ENCODE measurements at regions of chr11 and their contacts with region 1.

Region 1: DNA sequence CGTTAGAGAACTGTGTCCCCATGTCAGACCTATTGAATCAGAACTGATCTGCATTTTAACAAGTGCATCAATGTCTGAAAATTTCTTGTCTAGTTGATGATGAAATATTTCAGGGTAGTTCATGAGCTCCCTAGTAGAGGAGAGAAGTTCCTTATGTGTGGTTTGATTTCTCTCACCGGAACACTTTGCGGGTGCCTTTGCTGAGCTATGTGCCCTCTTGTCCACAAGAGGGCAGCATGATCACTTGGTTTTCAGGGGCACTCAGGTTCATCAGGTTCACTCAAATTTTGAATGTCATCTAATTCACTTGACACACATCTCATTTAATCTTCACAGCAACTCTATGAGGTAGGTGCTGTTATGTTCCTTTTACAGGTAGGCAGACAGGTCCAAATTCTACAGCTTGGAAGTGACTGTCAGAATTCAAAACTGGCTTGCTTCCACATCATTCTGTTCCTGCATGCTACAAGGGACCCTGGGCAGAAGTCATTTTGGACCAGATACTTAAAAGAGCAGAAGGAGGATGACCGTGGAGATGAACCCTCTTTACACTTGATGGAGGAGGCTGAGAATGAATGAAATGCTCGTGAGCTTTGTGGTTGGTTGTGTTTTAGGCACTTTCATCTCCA is 55.6 kb downstream of the P4HA3 start:
- DNase-seq: peak; percentile 81
- H3K4me3 ChIP-seq: no peak overlapping the region
- H3K27ac ChIP-seq: no peak overlapping the region
- H3K4me1 ChIP-seq: no peaks in the 10 kb centered on the region
- H3K27me3 ChIP-seq: no peaks in the 10 kb centered on the region
- CTCF ChIP-seq: peak; percentile 83 to 94
- POLR2A ChIP-seq: no peak

Region 2: DNA sequence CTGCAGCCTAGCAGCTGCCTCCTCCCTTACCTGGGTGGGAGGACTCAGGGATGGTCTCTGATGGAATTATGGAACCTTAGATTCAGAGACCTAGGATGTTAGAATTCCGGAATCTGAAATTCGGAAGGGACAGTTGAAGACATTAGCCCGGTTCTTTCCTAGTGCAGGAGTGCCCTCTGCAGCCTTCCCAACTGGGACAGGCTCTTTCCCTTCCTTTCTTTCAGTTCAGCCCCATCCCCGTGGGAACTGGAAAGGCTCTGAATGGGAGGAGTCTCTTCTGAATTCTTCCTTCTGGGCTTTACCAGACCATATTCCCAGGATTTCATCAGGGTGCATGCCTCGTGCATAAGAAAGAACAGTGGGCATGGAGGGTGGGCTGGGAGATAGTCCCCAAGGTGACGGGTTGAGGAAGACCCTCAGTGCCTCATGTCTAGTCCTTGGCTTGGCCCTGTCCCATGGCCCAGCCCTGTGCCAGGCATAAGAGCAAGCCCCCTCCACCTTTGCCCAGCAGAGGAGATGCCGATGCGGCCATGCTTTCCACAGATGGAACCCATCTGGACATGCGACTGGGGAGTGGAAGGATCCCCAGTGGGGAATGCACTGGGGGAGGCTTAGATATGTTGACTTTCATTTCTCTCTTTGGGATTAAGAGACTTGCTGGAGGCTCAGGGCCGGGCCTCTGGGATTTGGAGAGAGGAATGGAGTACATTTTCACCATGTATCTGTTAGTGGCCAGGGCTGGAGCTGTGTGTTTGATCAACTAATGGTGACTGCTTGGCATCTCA is 290.6 kb before region 1 on chr11:
- CTCF ChIA-PET with region 1: interaction called, 9 read pairs
- POLR2A ChIA-PET with region 1: no interaction called
- dilution Hi-C with region 1: no loop called
- intact Hi-C with region 1: loop called (anchors 1 kb)
- DNase-seq: no peak
- H3K4me3 ChIP-seq: no peak overlapping the region
- H3K27ac ChIP-seq: no peak overlapping the region
- H3K4me1 ChIP-seq: no peaks in the 10 kb centered on the region
- H3K27me3 ChIP-seq: peaks cover 0 to 2% of the 10 kb centered on the region in 2 experiments
- CTCF ChIP-seq: no peak
- POLR2A ChIP-seq: no peak

Region 3: DNA sequence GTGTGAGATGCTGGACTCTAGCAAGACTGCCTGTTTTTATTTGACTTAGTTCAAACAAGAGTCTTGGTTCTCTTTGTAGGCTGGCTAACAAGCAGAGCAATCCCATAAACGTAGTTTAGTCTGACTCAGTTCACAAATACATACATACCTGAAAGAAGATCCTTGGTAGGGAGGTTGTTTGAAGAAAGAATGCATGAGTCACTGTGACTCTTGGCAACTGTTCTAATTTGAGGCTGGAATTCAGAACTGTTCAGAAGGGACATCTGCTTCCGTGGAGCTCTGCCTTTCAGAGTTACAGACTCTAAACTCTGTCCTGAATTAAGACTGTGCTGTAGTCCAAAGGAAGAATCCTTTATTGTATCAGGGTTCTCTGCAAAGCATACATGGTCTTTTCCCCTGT is 117.3 kb before region 1 on chr11:
- CTCF ChIA-PET with region 1: no interaction called
- POLR2A ChIA-PET with region 1: no interaction called
- dilution Hi-C with region 1: no loop called
- intact Hi-C with region 1: no loop called
- DNase-seq: peak; percentile 86
- H3K4me3 ChIP-seq: no peak overlapping the region
- H3K27ac ChIP-seq: peak overlapping the region; percentile 37
- H3K4me1 ChIP-seq: peaks cover 26% of the 10 kb centered on the region
- H3K27me3 ChIP-seq: no peaks in the 10 kb centered on the region
- CTCF ChIP-seq: no peak
- POLR2A ChIP-seq: no peak

Region 4: GRCh38 chr11:74220376-74220775 is 35.5 kb before region 1 on chr11:
- CTCF ChIA-PET with region 1: no interaction called
- POLR2A ChIA-PET with region 1: no interaction called
- dilution Hi-C with region 1: no loop called
- intact Hi-C with region 1: no loop called
- DNase-seq: no peak
- H3K4me3 ChIP-seq: no peak overlapping the region
- H3K27ac ChIP-seq: no peak overlapping the region
- H3K4me1 ChIP-seq: no peaks in the 10 kb centered on the region
- H3K27me3 ChIP-seq: no peaks in the 10 kb centered on the region
- CTCF ChIP-seq: no peak
- POLR2A ChIP-seq: no peak

Region 5: GRCh38 chr11:74288911-74289310 is 33.1 kb after region 1 on chr11:
- CTCF ChIA-PET with region 1: no interaction called
- POLR2A ChIA-PET with region 1: no interaction called
- dilution Hi-C with region 1: no loop called
- intact Hi-C with region 1: no loop called
- DNase-seq: peak; percentile 61
- H3K4me3 ChIP-seq: no peak overlapping the region
- H3K27ac ChIP-seq: peak overlapping the region; percentile 75
- H3K4me1 ChIP-seq: peaks cover 15% of the 10 kb centered on the region
- H3K27me3 ChIP-seq: no peaks in the 10 kb centered on the region
- CTCF ChIP-seq: no peak
- POLR2A ChIP-seq: no peak

Region 6: DNA sequence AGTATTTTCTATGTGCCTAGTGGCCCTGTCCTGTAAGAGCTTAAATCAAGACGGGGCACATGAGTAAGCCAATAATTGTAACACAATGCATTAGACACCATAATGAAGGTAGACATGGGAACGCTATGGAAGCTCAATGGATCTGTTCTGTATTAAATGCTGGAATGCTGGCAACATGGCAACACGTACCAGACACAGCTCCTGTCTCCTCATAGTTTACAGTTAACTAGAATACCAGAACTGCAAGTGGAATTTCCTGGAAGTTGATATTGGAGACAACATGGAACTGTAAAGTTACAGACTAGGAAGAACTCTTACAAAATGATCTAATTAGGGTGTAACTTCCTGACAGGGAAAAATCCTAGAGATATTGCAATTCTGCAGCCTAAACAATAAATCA is 43.2 kb after region 1 on chr11:
- CTCF ChIA-PET with region 1: interaction called, 13 read pairs
- POLR2A ChIA-PET with region 1: no interaction called
- dilution Hi-C with region 1: no loop called
- intact Hi-C with region 1: no loop called
- DNase-seq: no peak
- H3K4me3 ChIP-seq: no peak overlapping the region
- H3K27ac ChIP-seq: no peak overlapping the region
- H3K4me1 ChIP-seq: no peaks in the 10 kb centered on the region
- H3K27me3 ChIP-seq: no peaks in the 10 kb centered on the region
- CTCF ChIP-seq: no peak
- POLR2A ChIP-seq: no peak

Region 7: GRCh38 chr11:74347381-74347780 is 91.5 kb after region 1 on chr11:
- CTCF ChIA-PET with region 1: interaction called, 11 read pairs
- POLR2A ChIA-PET with region 1: no interaction called
- dilution Hi-C with region 1: no loop called
- intact Hi-C with region 1: no loop called
- DNase-seq: peak; percentile 60
- H3K4me3 ChIP-seq: no peak overlapping the region
- H3K27ac ChIP-seq: no peak overlapping the region
- H3K4me1 ChIP-seq: peaks cover 6% of the 10 kb centered on the region
- H3K27me3 ChIP-seq: no peaks in the 10 kb centered on the region
- CTCF ChIP-seq: no peak
- POLR2A ChIP-seq: no peak

Region 8: DNA sequence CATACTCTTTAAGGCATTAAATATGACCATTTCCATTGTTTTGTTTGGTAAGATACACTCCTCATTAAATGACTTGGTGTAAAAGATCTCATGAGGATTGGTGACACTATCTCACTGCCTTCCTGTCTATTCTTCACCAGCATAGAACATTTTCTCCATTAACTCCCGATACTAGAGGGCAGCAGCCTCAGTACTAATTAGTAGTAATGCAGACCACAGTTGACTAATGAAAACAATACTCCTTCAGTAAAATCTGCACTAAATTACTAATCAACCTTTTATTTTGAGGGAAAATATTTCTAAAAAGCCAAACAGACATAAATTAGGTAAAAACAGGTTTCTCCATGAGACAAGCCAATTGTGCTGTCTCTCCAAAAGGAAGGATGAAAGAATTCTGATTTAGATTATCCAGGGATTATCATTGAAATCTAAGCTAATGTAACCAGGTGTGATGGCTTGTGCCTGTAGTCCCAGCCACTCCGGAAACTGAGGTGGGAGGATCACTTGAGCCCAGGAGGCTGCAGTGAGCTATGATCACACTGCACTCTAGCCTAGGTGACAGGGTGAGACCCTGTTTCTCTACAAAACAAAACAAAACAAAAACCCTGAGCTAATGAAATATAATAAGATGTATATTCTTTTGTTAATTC is 132.9 kb after region 1 on chr11:
- CTCF ChIA-PET with region 1: interaction called, 40 read pairs
- POLR2A ChIA-PET with region 1: no interaction called
- dilution Hi-C with region 1: no loop called
- intact Hi-C with region 1: loop called (anchors 1 kb)
- DNase-seq: peak; percentile 70
- H3K4me3 ChIP-seq: no peak overlapping the region
- H3K27ac ChIP-seq: peak overlapping the region; percentile 17
- H3K4me1 ChIP-seq: peaks cover 5% of the 10 kb centered on the region
- H3K27me3 ChIP-seq: no peaks in the 10 kb centered on the region
- CTCF ChIP-seq: peak; percentile 37 to 57
- POLR2A ChIP-seq: no peak

Region 9: GRCh38 chr11:74443071-74443864 is 187.4 kb after region 1 on chr11:
- CTCF ChIA-PET with region 1: interaction called, 440 read pairs
- POLR2A ChIA-PET with region 1: no interaction called
- dilution Hi-C with region 1: no loop called
- intact Hi-C with region 1: no loop called
- DNase-seq: peak; percentile 70
- H3K4me3 ChIP-seq: no peak overlapping the region
- H3K27ac ChIP-seq: no peak overlapping the region
- H3K4me1 ChIP-seq: no peaks in the 10 kb centered on the region
- H3K27me3 ChIP-seq: no peaks in the 10 kb centered on the region
- CTCF ChIP-seq: peak in 1 of 2 donors; percentile 26
- POLR2A ChIP-seq: no peak